BJ (cell line): ENCODE measurements at regions of chr17 and their contacts with region 1.

Region 1: DNA sequence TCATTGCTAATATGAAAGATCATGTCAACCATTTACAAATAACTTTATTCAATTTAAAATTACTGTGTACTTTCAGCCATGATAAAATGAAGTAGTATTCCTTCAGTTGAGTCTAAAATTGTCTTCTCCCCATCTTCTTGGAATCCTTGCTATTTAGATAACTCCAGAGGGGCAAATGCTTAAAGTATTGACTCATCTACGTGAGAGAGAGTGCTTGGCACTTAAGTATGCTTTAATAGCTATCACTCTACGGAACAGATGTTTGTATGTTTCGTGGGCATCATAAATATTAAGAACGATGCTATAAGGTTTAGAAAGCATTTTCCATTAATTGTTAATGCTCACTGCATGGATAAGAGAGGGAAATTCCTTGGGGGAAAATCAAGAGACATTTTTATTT is 69.3 kb upstream of the MED13 start:
- DNase-seq: no peak
- H3K4me3 ChIP-seq: no peak overlapping the region
- H3K27me3 ChIP-seq: peaks cover 2% of the 10 kb centered on the region; the same call in 1 of the 2 replicates
- CTCF ChIP-seq: no peak

Region 2: DNA sequence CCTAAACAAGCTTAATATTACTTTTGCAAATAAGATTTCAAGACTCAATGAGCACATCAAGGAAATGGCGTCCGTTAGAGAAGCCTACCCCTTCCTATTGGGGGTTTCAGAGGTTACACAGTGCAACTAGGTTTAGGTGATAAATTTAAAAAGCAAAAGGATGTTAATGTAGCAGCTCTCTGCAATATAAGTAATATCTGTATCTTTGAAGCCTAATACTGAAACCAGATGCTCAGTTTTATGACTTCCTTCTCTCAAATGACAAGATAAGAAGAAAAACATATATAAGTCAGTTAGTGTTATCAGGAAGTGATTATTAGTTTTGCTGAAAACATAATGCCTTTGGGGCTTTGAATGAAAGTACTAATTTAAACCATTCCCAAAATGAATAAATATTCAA is 15.0 kb before region 1 on chr17:
- CTCF ChIA-PET with region 1: no interaction called
- POLR2A ChIA-PET with region 1: interaction called, 16 read pairs
- DNase-seq: no peak
- H3K4me3 ChIP-seq: no peak overlapping the region
- H3K27me3 ChIP-seq: no peaks in the 10 kb centered on the region
- CTCF ChIP-seq: no peak